ENCODE measurements at regions of chr4 and their contacts with region 1.

Region 1: GRCh38 chr4:149781150-149781549 is 34.5 kb downstream of the IQCM start:
- DNase-seq: no peak
- H3K4me3 Mint-ChIP-seq: no peak overlapping the region
- H3K27ac Mint-ChIP-seq: peak overlapping the region; percentile 21
- H3K4me1 Mint-ChIP-seq: peaks cover 25% of the 10 kb centered on the region
- H3K27me3 Mint-ChIP-seq: no peaks in the 10 kb centered on the region
- CTCF ChIP-seq: no peak

Region 2: GRCh38 chr4:149708513-149709175 is 72.5 kb before region 1 on chr4:
- CTCF ChIA-PET with region 1: no interaction called
- intact Hi-C with region 1: no loop called
- DNase-seq: no peak
- H3K4me3 Mint-ChIP-seq: no peak overlapping the region
- H3K27ac Mint-ChIP-seq: no peak overlapping the region
- H3K4me1 Mint-ChIP-seq: no peaks in the 10 kb centered on the region
- H3K27me3 Mint-ChIP-seq: no peaks in the 10 kb centered on the region
- CTCF ChIP-seq: no peak

Region 3: GRCh38 chr4:149754526-149754925 is 26.6 kb before region 1 on chr4:
- CTCF ChIA-PET with region 1: no interaction called
- intact Hi-C with region 1: loop called (anchors 1 kb)
- DNase-seq: no peak
- H3K4me3 Mint-ChIP-seq: no peak overlapping the region
- H3K27ac Mint-ChIP-seq: peak overlapping the region; percentile 38
- H3K4me1 Mint-ChIP-seq: peaks cover 26% of the 10 kb centered on the region
- H3K27me3 Mint-ChIP-seq: no peaks in the 10 kb centered on the region
- CTCF ChIP-seq: no peak

Region 4: DNA sequence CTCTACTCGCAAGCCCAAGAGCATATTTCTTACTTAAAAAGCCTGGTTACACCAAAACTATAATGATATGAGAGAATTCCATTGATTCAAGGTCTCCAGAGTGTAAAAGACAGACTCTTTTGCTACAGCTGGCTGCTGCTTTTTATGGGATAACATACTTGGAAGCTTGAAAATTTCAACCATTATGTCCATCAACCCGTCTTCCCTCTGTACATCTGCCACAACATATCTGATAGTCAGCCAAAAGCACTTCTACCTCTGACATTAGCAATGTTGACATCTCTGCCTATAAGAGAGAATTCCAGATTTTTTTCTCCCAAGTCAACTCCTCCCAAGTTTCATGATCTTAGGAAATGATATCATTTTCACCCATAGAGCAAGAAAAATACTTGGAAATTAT is 88.9 kb after region 1 on chr4:
- CTCF ChIA-PET with region 1: no interaction called
- intact Hi-C with region 1: no loop called
- DNase-seq: no peak
- H3K4me3 Mint-ChIP-seq: no peak overlapping the region
- H3K27ac Mint-ChIP-seq: no peak overlapping the region
- H3K4me1 Mint-ChIP-seq: no peaks in the 10 kb centered on the region
- H3K27me3 Mint-ChIP-seq: no peaks in the 10 kb centered on the region
- CTCF ChIP-seq: no peak